Posterior vena cava (tissue), 2 donors: ENCODE measurements at regions of chr2 and their contacts with region 1.

Region 1: DNA sequence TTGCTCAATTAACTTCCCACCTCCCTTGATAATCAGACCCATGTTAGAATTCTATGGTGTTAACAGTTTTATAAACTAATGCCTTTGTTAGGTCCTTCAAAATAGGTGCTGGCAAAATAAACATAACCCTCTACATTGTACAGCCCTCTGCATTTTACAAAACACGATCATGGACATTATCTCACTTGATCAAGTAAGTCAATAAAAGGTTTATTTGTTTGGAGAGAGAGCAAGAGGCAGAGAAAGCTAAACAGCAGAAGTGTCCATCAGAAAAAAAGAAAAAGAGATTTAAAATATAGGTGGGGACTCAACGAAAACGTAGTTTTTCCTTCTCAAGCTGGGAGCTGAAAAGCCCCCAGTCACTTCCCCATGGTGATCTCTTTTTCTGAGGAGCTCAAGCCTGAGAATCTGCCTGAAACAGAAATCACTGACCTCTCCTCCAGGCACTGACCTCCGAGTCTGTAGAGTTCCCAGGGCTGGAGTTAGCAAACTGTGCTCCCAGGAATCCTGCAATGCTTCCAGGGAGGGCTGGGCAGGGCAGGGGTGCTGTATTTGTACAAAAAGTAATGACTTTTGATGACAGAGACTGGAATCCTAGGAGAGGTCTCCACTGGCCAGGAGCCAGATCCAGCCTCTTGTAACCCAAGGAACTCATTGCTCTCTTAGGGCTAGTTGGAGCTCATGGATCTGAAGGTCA is 137.8 kb upstream of the KLHL29 start:
- DNase-seq: no peak

Region 2: GRCh38 chr2:23135481-23136100 is 111.5 kb before region 1 on chr2:
- intact Hi-C with region 1: no loop called
- DNase-seq: no peak

Region 3: DNA sequence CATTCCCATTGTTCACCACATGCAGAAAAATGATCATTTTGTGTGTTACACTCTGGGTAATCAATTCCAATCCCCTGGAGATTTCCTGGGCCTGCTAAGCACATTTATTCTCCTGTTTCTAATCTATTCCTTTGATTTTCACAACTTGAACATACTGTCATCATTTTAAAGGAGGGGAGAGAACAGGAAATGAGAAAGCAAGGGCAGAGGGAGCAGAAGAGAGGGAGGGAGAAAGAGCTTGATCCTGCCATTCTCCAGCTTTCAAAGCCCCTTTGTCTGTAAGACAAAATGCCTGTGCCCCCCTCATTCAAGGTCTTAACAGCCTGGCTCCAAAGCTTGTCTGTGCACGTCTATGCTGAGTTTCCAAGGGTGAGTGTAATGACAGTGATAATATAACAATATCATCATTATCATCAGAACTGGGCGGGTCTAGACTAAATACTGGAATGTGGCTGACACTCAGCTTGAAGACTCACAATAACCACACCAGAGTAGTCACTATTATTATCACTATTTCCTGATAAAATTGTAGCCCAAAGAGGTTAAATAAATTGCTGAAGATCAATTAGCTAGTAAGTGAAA is 26.5 kb before region 1 on chr2:
- intact Hi-C with region 1: no loop called
- DNase-seq: no peak

Region 4: GRCh38 chr2:23312996-23313606 is 66.0 kb after region 1 on chr2:
- intact Hi-C with region 1: loop called in 1 of 2 experiments (anchors 2 kb)
- DNase-seq: no peak